Dorsolateral prefrontal cortex (tissue), 120 donors: ENCODE measurements at regions of chr4 and their contacts with region 1.

Region 1: GRCh38 chr4:38266616-38267015 is 306.4 kb downstream of the PTTG2 start:
- DNase-seq: peak in 7 of 10 donors; percentile 62 to 85 (median 70)
- H3K4me3 ChIP-seq: no peak overlapping the region
- H3K27ac ChIP-seq: peak overlapping the region in 58 of 59 donors; percentile 0 to 94 (median 76)
- H3K27me3 ChIP-seq: no peaks in the 10 kb centered on the region
- CTCF ChIP-seq: peak in 2 of 56 donors; percentile 13 to 24

Region 2: GRCh38 chr4:38302910-38303309 is 36.3 kb after region 1 on chr4:
- intact Hi-C with region 1: loop called in 1 of 2 experiments (anchors 5 kb)
- DNase-seq: no peak
- H3K4me3 ChIP-seq: no peak overlapping the region
- H3K27ac ChIP-seq: peak overlapping the region in 2 of 59 donors; percentile 6 to 97
- H3K27me3 ChIP-seq: no peaks in the 10 kb centered on the region
- CTCF ChIP-seq: no peak